CD8-positive, alpha-beta T cell (primary cell): ENCODE measurements at regions of chr4 and their contacts with region 1.

Region 1: DNA sequence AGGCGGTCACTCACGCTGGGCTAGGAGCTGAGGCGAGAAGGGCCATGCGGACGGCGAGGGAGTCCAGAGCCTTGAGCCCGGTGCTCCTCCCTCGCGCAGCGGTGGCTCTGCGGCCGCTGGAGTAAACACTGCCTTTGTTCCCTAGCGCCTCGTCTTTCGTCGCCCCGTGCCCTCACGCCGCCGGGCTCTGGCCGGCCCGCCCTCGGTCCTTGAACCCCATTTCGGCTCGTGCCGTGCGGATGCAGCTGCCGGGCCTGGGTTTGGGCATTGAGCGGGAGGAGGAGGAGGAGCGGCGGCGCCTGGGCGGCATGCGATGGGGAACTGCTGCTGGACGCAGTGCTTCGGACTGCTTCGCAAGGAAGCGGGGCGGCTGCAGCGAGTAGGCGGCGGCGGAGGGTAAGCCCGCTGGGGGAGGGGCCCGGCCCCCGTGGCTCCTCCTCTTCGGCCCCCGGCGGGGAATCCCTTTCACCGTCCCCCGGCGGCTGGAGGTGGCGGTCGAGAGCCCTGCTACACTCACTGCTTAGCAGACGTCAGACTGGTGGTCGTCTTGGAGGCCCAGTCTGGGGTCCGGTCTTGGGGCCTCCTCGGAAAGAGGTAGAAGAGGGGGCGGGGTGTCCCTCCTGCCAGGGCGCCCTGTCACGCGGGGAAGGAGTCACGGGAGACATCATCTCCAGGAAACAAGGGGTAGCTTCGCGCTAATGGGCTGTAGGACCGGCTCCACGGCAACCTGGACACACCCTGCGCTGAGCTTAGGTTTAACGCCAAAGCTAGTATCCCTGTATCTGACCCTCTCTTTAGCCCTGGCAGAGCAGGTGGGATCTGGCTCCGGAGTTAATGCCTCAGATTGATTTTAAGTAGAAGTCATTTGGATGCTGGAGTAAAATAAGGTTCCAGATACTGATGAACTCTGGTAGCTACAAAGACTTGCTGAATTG is at the start of gene AP1AR:
- DNase-seq: peak; percentile 54 to 91 (median 77)
- ATAC-seq: peak; percentile 58
- H3K4me3 ChIP-seq: peak within 1 kb of the TSS; percentile 86 to 90
- H3K4me3 Mint-ChIP-seq: peak within 1 kb of the TSS; percentile 97
- H3K27ac ChIP-seq: peak within 1 kb of the TSS; percentile 97
- H3K27ac Mint-ChIP-seq: peak within 1 kb of the TSS; percentile 100
- H3K4me1 ChIP-seq: peaks cover 24% of the 10 kb centered on the region
- H3K4me1 Mint-ChIP-seq: peaks cover 47% of the 10 kb centered on the region
- H3K27me3 ChIP-seq: no peaks in the 10 kb centered on the region
- H3K27me3 Mint-ChIP-seq: peaks cover 1% of the 10 kb centered on the region
- CTCF ChIP-seq: no peak
- total RNA-seq, gene AP1AR: 3.8 to 5.2 TPM

Region 2: DNA sequence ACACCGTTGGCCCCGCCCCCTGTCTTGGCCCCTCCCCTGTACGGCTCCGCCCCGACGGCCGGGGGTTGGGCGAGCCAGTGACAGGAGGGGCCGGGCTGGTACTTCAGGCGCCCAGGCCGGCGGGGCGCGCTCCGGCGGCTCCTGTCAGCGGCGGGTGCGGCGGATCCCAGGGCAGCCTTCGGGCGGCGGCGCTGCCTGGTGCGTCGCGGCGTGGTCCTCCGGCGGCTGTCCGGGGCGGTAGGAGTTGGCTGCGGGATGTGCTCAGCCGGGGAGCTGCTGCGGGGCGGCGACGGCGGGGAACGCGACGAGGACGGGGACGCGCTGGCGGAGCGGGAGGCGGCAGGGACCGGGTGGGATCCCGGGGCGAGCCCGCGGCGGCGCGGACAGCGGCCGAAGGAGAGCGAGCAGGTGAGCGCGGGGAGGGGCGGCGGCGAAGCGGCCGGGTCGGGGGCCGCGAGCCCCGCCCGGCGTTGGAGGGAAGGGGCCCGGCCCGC is 86.7 kb before region 1 on chr4 and contains the start of gene FAM241A:
- CTCF ChIA-PET with region 1: interaction called, 7 read pairs
- POLR2A ChIA-PET with region 1: interaction called, 5 read pairs
- intact Hi-C with region 1: loop called (anchors 1 kb)
- DNase-seq: peak; percentile 84 to 95 (median 90)
- ATAC-seq: peak; percentile 96
- H3K4me3 ChIP-seq: peak within 1 kb of the TSS; percentile 75 to 78
- H3K4me3 Mint-ChIP-seq: peak within 1 kb of the TSS; percentile 98
- H3K27ac ChIP-seq: peak within 1 kb of the TSS; percentile 69
- H3K27ac Mint-ChIP-seq: peak within 1 kb of the TSS; percentile 94
- H3K4me1 ChIP-seq: peaks cover 10% of the 10 kb centered on the region
- H3K4me1 Mint-ChIP-seq: peaks cover 29% of the 10 kb centered on the region
- H3K27me3 ChIP-seq: no peaks in the 10 kb centered on the region
- H3K27me3 Mint-ChIP-seq: no peaks in the 10 kb centered on the region
- CTCF ChIP-seq: no peak
- total RNA-seq, gene FAM241A: 0.67 to 0.90 TPM

Region 3: DNA sequence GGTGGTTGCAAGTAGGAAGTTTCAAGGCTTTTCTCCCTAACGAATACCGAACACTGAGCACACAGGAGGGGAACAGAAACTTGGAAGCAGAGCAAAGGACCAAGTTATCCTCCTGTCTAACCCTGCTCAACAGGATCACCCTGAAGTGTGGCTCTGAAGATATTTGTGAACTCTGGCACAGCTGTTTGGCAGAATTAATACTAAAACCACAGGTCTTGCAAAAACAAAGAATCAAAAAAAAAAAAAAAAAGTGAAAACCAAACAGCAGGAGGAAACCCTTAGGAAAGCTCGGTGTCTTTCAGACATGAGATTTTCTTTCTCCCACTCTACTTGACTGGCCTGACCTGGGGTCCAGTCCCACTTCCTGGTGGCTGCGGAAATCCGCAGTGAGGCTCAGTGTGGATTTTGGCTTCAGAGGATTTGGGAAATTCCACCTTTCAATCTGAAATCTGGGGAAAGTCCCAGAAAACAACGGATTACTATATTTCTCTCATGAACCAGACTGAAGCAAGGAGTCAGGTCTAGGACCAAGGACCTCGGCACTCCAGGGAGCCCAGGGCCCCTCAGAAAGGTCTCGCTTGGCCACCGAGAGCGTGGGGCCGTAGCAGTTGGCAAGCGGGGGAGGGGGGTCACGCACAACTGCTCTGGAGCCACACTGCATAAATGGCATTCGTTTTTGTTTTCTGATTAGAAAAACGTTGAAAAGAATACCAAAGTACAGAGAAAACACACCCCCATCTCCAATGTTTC is 52.8 kb after region 1 on chr4:
- CTCF ChIA-PET with region 1: interaction called, 5 read pairs
- POLR2A ChIA-PET with region 1: interaction called, 8 read pairs
- intact Hi-C with region 1: loop called (anchors 1 to 2 kb)
- DNase-seq: peak in 2 of 9 experiments; percentile 65 to 78
- ATAC-seq: no peak
- H3K4me3 ChIP-seq: peak overlapping the region; percentile 71 to 94
- H3K4me3 Mint-ChIP-seq: peak overlapping the region; percentile 95
- H3K27ac ChIP-seq: peak overlapping the region; percentile 80 to 82
- H3K27ac Mint-ChIP-seq: peak overlapping the region; percentile 93
- H3K4me1 ChIP-seq: peaks cover 27% of the 10 kb centered on the region
- H3K4me1 Mint-ChIP-seq: peaks cover 78% of the 10 kb centered on the region
- H3K27me3 ChIP-seq: no peaks in the 10 kb centered on the region
- H3K27me3 Mint-ChIP-seq: no peaks in the 10 kb centered on the region
- CTCF ChIP-seq: no peak

Region 4: DNA sequence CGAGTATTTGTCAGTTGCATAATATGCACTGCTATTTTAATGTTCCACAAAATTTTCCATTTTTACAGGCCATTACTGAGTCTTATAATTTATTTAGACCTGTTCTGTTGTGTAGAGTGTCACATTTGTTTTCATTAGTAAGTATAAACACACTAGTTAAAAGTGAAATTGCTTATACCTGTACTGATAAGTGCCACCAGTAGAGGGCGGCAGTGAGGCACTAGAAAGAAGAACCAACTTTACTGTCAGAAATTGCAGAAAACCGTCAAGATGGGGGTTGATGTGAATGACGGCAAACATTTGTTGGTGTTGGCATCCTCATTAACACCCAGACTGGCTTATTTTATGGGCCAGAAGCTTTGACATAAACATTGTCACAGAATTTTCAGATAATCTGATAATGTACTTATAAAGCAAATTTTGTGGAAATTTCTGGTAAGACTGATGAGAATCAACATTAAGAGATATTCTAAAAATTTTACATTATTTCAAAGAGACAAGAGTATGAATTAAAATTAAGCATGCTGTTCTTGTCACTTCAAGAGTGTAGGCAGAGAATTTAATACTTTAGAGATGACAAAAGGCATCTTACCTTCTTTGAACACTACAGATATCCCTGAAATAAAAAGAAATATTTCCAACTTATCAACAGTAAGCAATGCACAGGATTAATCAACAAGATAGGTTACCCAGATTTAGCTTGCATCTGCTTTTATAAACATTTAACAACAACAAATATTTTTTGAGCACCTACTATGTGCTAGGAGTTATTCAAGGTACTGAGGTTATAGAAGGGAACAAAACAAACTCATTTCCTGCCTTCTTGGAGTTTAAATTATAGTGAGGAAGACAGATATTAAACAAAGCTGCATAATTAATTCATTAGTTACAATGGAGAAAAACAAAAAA is 90.0 kb after region 1 on chr4:
- CTCF ChIA-PET with region 1: interaction called, 6 read pairs
- POLR2A ChIA-PET with region 1: no interaction called
- intact Hi-C with region 1: loop called in 1 of 2 experiments (anchors 5 kb)
- DNase-seq: peak; percentile 58 to 85 (median 76)
- ATAC-seq: peak; percentile 99
- H3K4me3 ChIP-seq: no peak overlapping the region
- H3K4me3 Mint-ChIP-seq: no peak overlapping the region
- H3K27ac ChIP-seq: no peak overlapping the region
- H3K27ac Mint-ChIP-seq: no peak overlapping the region
- H3K4me1 ChIP-seq: peaks cover 10% of the 10 kb centered on the region
- H3K4me1 Mint-ChIP-seq: peaks cover 5% of the 10 kb centered on the region
- H3K27me3 ChIP-seq: no peaks in the 10 kb centered on the region
- H3K27me3 Mint-ChIP-seq: no peaks in the 10 kb centered on the region
- CTCF ChIP-seq: peak; percentile 96

Region 5: GRCh38 chr4:112636688-112637551 is 404.9 kb after region 1 on chr4 and contains the starts of genes LARP7 and ZGRF1:
- CTCF ChIA-PET with region 1: no interaction called
- POLR2A ChIA-PET with region 1: no interaction called
- intact Hi-C with region 1: loop called (anchors 1 kb)
- DNase-seq: peak; percentile 95 to 100 (median 98)
- ATAC-seq: peak; percentile 86
- H3K4me3 ChIP-seq: peak within 1 kb of the TSS; percentile 74 to 76
- H3K4me3 Mint-ChIP-seq: no peak within 1 kb of the TSS
- H3K27ac ChIP-seq: peak within 1 kb of the TSS; percentile 97 to 99
- H3K27ac Mint-ChIP-seq: no peak within 1 kb of the TSS
- H3K4me1 ChIP-seq: peaks cover 19% of the 10 kb centered on the region
- H3K4me1 Mint-ChIP-seq: peaks cover 17% of the 10 kb centered on the region
- H3K27me3 ChIP-seq: no peaks in the 10 kb centered on the region
- H3K27me3 Mint-ChIP-seq: no peaks in the 10 kb centered on the region
- CTCF ChIP-seq: peak; percentile 89
- total RNA-seq, gene LARP7: 46.7 to 47.2 TPM
- total RNA-seq, gene ZGRF1: 7.9 to 9.1 TPM